Endothelial cell of umbilical vein (primary cell): ENCODE measurements at regions of chr11 and their contacts with region 1.

Region 1: DNA sequence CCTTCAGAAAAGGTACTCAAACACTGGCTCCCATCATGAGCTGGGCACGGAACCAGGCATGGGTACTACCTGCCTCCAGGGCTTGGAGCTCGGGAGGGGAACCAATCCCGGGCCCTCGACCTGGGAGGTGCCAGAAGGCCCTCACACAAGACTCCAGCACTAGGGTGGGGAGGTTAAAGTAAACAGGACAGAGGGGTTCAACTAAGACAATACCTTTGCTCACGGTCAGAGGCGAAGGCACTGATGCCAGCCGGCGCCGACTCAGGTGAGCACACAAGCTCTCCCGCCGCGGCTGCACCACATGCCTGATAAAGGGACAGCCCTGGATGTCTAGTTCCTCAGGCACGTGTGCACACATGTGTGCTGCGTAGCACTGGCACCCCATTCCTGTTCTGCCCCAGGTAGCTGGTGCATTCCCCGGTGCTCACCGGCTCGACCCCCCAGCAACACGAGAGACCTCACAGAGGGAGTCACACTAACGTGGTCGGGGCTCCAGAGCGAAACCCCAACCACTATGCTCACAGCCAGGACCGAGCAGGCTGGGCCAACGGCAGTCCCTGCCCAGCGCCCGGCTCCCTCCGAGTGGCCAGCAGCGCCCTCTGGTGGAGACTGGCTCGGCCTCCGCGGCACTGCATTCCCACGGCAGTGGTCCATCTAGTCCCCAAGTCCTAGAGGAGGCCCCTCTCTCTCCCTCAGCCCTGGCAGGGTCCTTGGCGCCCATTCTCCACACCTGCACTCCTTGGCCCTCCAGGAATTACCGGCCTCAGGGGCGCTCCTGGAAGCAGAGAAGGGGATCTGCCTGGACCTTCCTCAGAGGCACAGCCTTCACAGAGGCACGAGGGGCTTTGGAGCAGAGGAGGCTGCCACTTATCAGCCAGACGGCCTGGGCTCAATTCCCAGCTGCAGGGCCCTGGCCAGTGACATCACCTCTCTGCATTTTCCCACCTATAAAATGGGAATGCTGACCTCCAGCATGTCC is 28.8 kb upstream of the MOB2 start:
- DNase-seq: peak; percentile 63
- H3K4me3 ChIP-seq: no peak overlapping the region
- H3K27ac ChIP-seq: no peak overlapping the region
- H3K4me1 ChIP-seq: no peaks in the 10 kb centered on the region
- H3K27me3 ChIP-seq: no peaks in the 10 kb centered on the region
- CTCF ChIP-seq: peak; percentile 93 to 98
- POLR2A ChIP-seq: no peak

Region 2: DNA sequence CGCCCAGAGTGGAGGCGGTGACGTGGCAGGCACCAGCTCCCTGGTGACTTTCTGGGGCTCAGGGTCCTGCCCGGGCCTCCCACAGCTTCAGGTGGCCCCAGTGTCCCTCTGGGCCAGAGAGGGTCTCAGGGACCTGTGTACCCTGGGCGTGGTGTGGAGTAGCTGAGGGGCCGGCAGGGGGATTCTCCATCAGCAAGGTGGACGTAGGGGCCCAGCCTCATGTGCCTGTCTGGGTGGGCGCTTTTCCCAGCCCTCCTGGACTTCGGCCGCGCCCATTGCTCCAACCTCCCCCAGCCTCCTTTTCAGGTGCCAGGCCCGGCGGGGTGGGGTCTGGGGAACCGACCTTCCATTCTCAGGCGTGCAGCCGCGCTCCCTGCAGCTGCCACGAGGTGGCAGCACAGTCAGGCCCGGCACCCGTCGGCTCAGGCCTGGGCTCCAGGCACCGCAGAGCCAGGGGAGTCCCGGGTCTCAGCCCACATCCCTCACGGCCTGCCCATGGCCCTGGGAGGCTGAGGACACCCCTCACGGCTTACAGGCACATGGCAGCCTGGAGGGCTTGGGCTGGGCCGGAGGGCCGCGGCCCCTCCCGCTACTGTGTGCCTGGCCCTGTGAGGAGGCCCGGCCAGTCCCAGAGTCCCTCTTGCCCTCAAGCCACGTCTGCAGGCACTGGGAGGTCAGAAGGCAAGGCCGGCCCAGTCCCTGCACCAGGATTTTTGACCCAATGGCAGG is 312.4 kb before region 1 on chr11:
- CTCF ChIA-PET with region 1: interaction called, 36 read pairs
- POLR2A ChIA-PET with region 1: no interaction called
- dilution Hi-C with region 1: no loop called
- intact Hi-C with region 1: loop called (anchors 1 kb)
- DNase-seq: peak; percentile 29
- H3K4me3 ChIP-seq: no peak overlapping the region
- H3K27ac ChIP-seq: no peak overlapping the region
- H3K4me1 ChIP-seq: no peaks in the 10 kb centered on the region
- H3K27me3 ChIP-seq: no peaks in the 10 kb centered on the region
- CTCF ChIP-seq: peak; percentile 83 to 97
- POLR2A ChIP-seq: no peak

Region 3: GRCh38 chr11:1262172-1263006 is 253.0 kb before region 1 on chr11:
- CTCF ChIA-PET with region 1: interaction called, 4 read pairs
- POLR2A ChIA-PET with region 1: no interaction called
- dilution Hi-C with region 1: no loop called
- intact Hi-C with region 1: loop called (anchors 1 kb)
- DNase-seq: peak; percentile 88
- H3K4me3 ChIP-seq: peak overlapping the region in 2 of 3 experiments; percentile 36 to 53
- H3K27ac ChIP-seq: peak overlapping the region; percentile 52
- H3K4me1 ChIP-seq: peaks cover 4% of the 10 kb centered on the region
- H3K27me3 ChIP-seq: no peaks in the 10 kb centered on the region
- CTCF ChIP-seq: no peak
- POLR2A ChIP-seq: peak; percentile 76

Region 4: GRCh38 chr11:1389103-1389931 is 126.1 kb before region 1 on chr11:
- CTCF ChIA-PET with region 1: no interaction called
- POLR2A ChIA-PET with region 1: no interaction called
- dilution Hi-C with region 1: no loop called
- intact Hi-C with region 1: loop called (anchors 10 kb)
- DNase-seq: peak; percentile 96
- H3K4me3 ChIP-seq: peak overlapping the region in 1 of 3 experiments; percentile 32
- H3K27ac ChIP-seq: no peak overlapping the region
- H3K4me1 ChIP-seq: peaks cover 3% of the 10 kb centered on the region
- H3K27me3 ChIP-seq: peaks cover 22 to 29% of the 10 kb centered on the region in 2 experiments
- CTCF ChIP-seq: peak in 1 of 2 donors; percentile 13
- POLR2A ChIP-seq: no peak

Region 5: DNA sequence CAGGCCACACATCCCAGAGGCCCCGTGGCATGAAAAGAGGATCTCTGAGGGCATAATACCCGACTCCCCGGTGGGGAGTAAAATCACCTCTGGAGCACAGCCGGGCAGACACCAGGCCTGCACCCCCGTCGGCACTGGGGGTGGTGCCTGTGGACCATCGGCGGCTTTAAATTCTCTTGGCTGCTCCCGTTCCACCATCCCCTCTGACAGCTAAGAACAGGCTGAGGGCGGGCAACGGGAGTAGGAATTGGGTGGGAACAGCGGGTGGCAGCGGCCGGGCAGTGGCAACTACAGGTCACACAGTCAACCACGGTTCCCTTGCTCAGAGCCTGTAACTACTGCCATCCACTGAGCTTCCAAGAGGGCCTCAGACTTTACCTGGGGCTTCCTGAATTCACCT is 11.4 kb after region 1 on chr11:
- CTCF ChIA-PET with region 1: interaction called, 13 read pairs
- POLR2A ChIA-PET with region 1: no interaction called
- dilution Hi-C with region 1: no loop called
- intact Hi-C with region 1: no loop called
- DNase-seq: no peak
- H3K4me3 ChIP-seq: no peak overlapping the region
- H3K27ac ChIP-seq: no peak overlapping the region
- H3K4me1 ChIP-seq: no peaks in the 10 kb centered on the region
- H3K27me3 ChIP-seq: no peaks in the 10 kb centered on the region
- CTCF ChIP-seq: no peak
- POLR2A ChIP-seq: no peak

Region 6: DNA sequence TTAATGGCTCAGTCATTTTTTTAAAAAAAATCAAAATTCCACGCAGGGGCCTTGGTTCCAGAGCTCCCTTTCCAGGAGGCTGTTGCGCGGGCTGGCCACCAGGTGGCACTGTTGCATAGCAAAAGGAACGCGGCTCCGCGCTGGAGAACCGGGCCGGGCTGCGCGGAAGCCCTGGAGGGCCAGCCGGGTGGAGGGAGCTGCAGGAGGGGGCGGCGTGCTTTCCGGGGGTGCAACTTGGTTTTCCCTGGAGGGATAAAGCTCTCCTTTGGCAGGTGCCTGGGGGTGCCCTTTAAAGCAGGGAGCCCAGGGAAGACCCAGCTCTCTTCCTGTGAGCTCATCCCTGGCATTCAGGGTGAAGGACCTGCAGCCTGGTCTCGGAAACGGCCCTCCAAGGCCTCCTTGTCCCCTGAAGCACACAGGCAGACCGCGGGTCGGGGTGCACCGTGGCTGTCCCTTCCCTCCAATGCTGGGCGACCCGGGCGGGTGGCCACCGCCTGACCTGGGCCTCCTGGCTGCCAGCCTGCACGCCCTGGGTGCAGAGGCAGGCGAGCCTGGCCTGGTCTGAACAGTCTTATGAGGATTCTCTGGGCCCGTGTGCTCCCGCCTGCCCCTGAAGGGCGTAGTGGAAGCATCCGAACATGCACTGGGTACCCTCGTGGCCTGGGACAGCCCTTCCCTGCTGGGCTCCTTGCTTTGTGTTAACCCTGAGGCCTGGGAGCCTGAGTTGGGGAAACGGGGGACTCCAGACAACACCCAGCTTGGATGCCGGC is 137.6 kb after region 1 on chr11:
- CTCF ChIA-PET with region 1: no interaction called
- POLR2A ChIA-PET with region 1: no interaction called
- dilution Hi-C with region 1: no loop called
- intact Hi-C with region 1: no loop called
- DNase-seq: peak; percentile 44
- H3K4me3 ChIP-seq: no peak overlapping the region
- H3K27ac ChIP-seq: no peak overlapping the region
- H3K4me1 ChIP-seq: peaks cover 2% of the 10 kb centered on the region
- H3K27me3 ChIP-seq: peaks cover 0 to 4% of the 10 kb centered on the region in 2 experiments
- CTCF ChIP-seq: peak; percentile 93
- POLR2A ChIP-seq: no peak